Natural killer cell (primary cell): ENCODE measurements at regions of chr5 and their contacts with region 1.

Region 1: DNA sequence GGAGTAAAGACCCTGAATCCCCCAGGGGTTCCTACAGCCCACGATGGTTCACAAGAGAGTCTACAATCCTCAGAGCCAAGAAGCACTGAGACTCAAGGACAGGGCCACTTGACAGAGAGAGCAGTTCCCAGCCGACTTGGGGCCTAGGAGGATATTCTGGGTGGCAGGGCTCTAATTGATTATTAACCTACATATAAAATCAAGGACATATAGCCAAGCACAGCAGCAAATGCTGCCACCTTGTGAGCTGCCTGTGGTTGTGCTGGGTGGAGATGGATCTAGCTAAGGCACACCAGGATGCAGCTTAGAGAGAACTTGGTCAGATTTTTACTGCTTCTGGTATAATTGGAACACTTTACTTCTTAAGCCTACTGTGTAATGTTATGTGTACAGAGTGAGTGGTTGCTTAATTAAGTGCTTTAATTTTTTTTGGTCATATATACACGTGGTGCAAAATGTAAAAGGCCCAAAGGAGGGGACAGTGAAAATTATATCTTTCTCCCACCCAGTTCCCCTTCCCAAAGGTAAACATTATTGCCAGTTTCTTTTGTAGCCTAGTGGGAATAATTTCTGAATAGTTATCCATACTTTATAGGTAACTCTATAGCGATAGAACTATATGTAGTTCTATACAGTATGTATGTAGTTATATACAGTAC is 78.8 kb downstream of the F2RL2 start:
- DNase-seq: peak; percentile 40 to 81
- ATAC-seq: peak in 1 of 3 donors; percentile 16
- H3K4me3 ChIP-seq: no peak overlapping the region
- H3K4me3 Mint-ChIP-seq: peak overlapping the region; percentile 79
- H3K27ac ChIP-seq: peak overlapping the region; percentile 90
- H3K27ac Mint-ChIP-seq: peak overlapping the region; percentile 96 to 98
- H3K4me1 ChIP-seq: peaks cover 62% of the 10 kb centered on the region
- H3K4me1 Mint-ChIP-seq: peaks cover 87 to 90% of the 10 kb centered on the region in 2 donors
- H3K27me3 ChIP-seq: no peaks in the 10 kb centered on the region
- H3K27me3 Mint-ChIP-seq: no peaks in the 10 kb centered on the region
- CTCF ChIP-seq: peak; percentile 55

Region 2: GRCh38 chr5:76325876-76326491 is 218.4 kb before region 1 on chr5:
- intact Hi-C with region 1: loop called (anchors 5 kb)
- DNase-seq: peak; percentile 47 to 66
- ATAC-seq: peak; percentile 93 to 94 (median 93)
- H3K4me3 ChIP-seq: no peak overlapping the region
- H3K4me3 Mint-ChIP-seq: peak overlapping the region; percentile 86
- H3K27ac ChIP-seq: peak overlapping the region; percentile 81
- H3K27ac Mint-ChIP-seq: peak overlapping the region; percentile 90 to 94
- H3K4me1 ChIP-seq: peaks cover 52% of the 10 kb centered on the region
- H3K4me1 Mint-ChIP-seq: peaks cover 69 to 78% of the 10 kb centered on the region in 2 donors
- H3K27me3 ChIP-seq: no peaks in the 10 kb centered on the region
- H3K27me3 Mint-ChIP-seq: no peaks in the 10 kb centered on the region
- CTCF ChIP-seq: no peak

Region 3: DNA sequence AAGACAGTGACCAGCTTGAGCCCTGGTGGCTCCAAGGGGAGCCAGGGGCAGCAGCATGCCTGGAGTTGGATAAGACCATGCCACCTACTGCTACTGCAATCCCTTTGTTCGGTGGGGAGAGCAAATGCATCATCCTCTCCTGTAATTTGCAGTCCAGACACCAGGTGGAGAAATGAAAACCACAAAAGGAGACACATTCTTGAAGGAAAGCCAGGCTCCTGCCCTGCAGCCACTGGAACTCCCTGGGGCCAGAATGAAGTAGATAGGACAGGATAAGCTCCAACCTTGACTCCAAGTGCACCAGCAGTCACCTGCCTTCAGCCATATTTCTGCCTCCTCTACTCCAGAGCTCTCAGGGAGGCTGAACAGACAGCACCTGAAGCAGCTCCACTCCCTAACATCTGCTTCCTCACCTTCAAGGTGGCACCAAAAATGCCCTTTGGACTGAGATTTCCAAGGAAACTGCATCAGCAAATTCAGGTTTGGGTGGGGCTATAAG is 206.4 kb before region 1 on chr5:
- intact Hi-C with region 1: loop called (anchors 1 kb)
- DNase-seq: peak; percentile 21 to 80
- ATAC-seq: peak; percentile 47 to 85 (median 78)
- H3K4me3 ChIP-seq: no peak overlapping the region
- H3K4me3 Mint-ChIP-seq: no peak overlapping the region
- H3K27ac ChIP-seq: no peak overlapping the region
- H3K27ac Mint-ChIP-seq: peak overlapping the region in 1 of 2 donors; percentile 33
- H3K4me1 ChIP-seq: peaks cover 23% of the 10 kb centered on the region
- H3K4me1 Mint-ChIP-seq: peaks cover 28 to 34% of the 10 kb centered on the region in 2 donors
- H3K27me3 ChIP-seq: no peaks in the 10 kb centered on the region
- H3K27me3 Mint-ChIP-seq: no peaks in the 10 kb centered on the region
- CTCF ChIP-seq: peak; percentile 49

Region 4: DNA sequence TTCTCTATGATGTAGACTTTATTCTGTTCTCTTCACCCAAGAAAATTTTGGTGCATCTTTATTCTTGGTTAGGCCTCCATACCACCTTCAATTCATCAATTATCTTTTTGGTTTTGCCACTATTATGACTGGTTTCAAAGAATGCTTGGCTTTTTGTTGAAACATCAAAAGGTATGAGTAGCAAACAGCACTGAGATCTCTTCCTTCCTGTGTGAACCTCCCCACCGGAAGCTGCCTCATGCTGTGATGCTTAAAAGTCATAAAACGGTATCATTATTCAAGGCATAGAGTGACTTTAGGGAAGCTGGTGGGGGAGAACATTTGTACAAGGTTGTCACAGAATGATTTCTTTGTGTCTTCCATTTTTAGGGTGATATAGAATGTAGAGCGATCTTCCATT is 70.7 kb before region 1 on chr5:
- intact Hi-C with region 1: loop called (anchors 1 kb)
- DNase-seq: peak; percentile 51 to 87
- ATAC-seq: peak; percentile 91 to 98 (median 96)
- H3K4me3 ChIP-seq: no peak overlapping the region
- H3K4me3 Mint-ChIP-seq: peak overlapping the region; percentile 90
- H3K27ac ChIP-seq: peak overlapping the region; percentile 76
- H3K27ac Mint-ChIP-seq: peak overlapping the region; percentile 96 to 99
- H3K4me1 ChIP-seq: peaks cover 47% of the 10 kb centered on the region
- H3K4me1 Mint-ChIP-seq: peaks cover 76 to 80% of the 10 kb centered on the region in 2 donors
- H3K27me3 ChIP-seq: no peaks in the 10 kb centered on the region
- H3K27me3 Mint-ChIP-seq: no peaks in the 10 kb centered on the region
- CTCF ChIP-seq: no peak

Region 5: GRCh38 chr5:76489877-76490688 is 54.3 kb before region 1 on chr5:
- intact Hi-C with region 1: no loop called
- DNase-seq: no peak
- ATAC-seq: no peak
- H3K4me3 ChIP-seq: no peak overlapping the region
- H3K4me3 Mint-ChIP-seq: no peak overlapping the region
- H3K27ac ChIP-seq: no peak overlapping the region
- H3K27ac Mint-ChIP-seq: peak overlapping the region; percentile 56 to 82
- H3K4me1 ChIP-seq: peaks cover 15% of the 10 kb centered on the region
- H3K4me1 Mint-ChIP-seq: peaks cover 71 to 76% of the 10 kb centered on the region in 2 donors
- H3K27me3 ChIP-seq: no peaks in the 10 kb centered on the region
- H3K27me3 Mint-ChIP-seq: no peaks in the 10 kb centered on the region
- CTCF ChIP-seq: no peak

Region 6: DNA sequence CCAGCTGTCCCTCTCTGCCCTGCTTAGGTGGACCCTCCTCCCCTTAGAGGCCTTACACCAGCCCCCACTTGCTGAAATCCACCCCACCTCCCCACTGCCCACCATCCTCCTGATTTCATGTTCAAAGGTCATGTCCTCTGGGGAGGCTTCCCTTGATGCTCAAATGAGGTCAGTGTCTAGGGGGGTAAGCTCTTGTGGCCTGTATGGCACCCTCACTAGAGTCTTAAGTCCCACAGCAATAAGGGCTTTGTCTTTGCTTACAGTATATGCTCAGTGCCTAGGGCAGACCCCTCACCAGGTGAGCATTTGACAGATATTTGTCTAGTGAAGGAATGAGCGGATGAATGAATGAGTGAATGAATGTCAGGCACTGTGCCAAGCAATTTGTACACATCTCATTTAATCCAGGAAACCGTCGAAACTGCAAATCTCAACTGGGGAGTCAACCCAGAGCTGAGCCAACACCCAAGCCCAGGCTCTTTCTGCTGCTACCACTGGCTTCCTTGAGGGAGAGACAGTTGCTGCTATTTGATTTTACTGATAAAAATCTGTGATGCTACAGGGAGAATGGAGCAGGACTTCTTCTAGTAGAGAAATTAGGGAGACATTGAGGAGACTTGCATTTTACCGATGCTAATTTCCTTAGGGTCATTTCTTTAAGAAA is 39.4 kb before region 1 on chr5:
- intact Hi-C with region 1: loop called (anchors 5 kb)
- DNase-seq: no peak
- ATAC-seq: peak; percentile 35 to 54 (median 50)
- H3K4me3 ChIP-seq: no peak overlapping the region
- H3K4me3 Mint-ChIP-seq: peak overlapping the region; percentile 35
- H3K27ac ChIP-seq: no peak overlapping the region
- H3K27ac Mint-ChIP-seq: peak overlapping the region; percentile 77 to 81
- H3K4me1 ChIP-seq: peaks cover 20% of the 10 kb centered on the region
- H3K4me1 Mint-ChIP-seq: peaks cover 57 to 73% of the 10 kb centered on the region in 2 donors
- H3K27me3 ChIP-seq: no peaks in the 10 kb centered on the region
- H3K27me3 Mint-ChIP-seq: no peaks in the 10 kb centered on the region
- CTCF ChIP-seq: no peak

Region 7: DNA sequence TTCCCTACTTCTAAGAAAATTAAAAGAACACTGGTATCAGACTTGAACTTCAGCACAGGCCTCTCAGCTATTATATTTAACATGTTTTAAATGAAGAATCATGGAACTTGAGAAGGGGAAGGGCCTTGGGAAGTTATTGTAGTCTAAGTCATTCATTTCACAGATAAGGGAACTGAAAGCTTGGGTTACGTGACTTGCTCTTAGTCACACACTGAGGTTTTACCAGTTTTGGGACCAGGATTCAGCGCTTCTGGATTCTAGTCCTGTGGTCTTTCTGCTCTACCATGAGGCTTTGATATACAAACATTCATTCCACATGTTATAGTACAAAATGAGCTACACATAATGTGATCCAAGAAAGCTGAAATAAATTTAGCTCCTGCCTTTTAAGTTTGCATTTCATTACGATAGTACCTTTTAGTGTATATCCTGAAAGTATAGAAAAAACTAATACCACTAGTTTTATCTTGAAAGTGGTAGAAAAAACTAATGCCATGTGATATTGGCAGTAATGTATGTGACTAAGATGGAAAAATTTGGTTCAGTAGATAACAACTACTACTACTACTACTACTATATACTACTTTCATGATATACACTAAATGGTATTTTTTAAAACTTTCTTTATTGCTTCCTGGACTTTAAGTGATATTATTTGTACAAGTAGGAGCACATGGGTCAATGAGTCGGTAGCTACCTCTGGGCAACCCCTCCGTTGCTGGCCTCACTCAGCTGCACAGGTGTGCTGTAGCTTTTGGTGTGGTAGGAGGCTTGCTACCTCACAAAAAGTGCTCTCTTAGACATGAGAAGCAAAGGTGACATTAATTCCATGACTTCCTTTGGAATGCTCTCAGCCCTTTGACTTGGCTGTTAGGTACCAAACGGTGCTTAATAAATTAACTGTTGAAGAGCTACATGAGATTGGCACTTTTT is 38.1 kb after region 1 on chr5:
- intact Hi-C with region 1: loop called (anchors 5 kb)
- DNase-seq: peak in 1 of 2 donors; percentile 12
- ATAC-seq: peak in 1 of 3 donors; percentile 42
- H3K4me3 ChIP-seq: no peak overlapping the region
- H3K4me3 Mint-ChIP-seq: no peak overlapping the region
- H3K27ac ChIP-seq: peak overlapping the region; percentile 14
- H3K27ac Mint-ChIP-seq: peak overlapping the region; percentile 75 to 82
- H3K4me1 ChIP-seq: peaks cover 6% of the 10 kb centered on the region
- H3K4me1 Mint-ChIP-seq: peaks cover 20 to 33% of the 10 kb centered on the region in 2 donors
- H3K27me3 ChIP-seq: no peaks in the 10 kb centered on the region
- H3K27me3 Mint-ChIP-seq: no peaks in the 10 kb centered on the region
- CTCF ChIP-seq: no peak

Region 8: DNA sequence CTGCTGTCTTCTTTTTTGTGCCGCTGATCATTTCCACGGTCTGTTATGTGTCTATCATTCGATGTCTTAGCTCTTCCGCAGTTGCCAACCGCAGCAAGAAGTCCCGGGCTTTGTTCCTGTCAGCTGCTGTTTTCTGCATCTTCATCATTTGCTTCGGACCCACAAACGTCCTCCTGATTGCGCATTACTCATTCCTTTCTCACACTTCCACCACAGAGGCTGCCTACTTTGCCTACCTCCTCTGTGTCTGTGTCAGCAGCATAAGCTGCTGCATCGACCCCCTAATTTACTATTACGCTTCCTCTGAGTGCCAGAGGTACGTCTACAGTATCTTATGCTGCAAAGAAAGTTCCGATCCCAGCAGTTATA is 188.6 kb after region 1 on chr5:
- intact Hi-C with region 1: loop called (anchors 2 kb)
- DNase-seq: peak; percentile 54 to 87
- ATAC-seq: peak; percentile 74 to 85 (median 83)
- H3K4me3 ChIP-seq: peak overlapping the region; percentile 9
- H3K4me3 Mint-ChIP-seq: peak overlapping the region; percentile 72
- H3K27ac ChIP-seq: peak overlapping the region; percentile 82
- H3K27ac Mint-ChIP-seq: peak overlapping the region; percentile 90 to 95
- H3K4me1 ChIP-seq: peaks cover 38% of the 10 kb centered on the region
- H3K4me1 Mint-ChIP-seq: peaks cover 62 to 63% of the 10 kb centered on the region in 2 donors
- H3K27me3 ChIP-seq: no peaks in the 10 kb centered on the region
- H3K27me3 Mint-ChIP-seq: no peaks in the 10 kb centered on the region
- CTCF ChIP-seq: no peak